ENCODE measurements at regions of chr9 and their contacts with region 1.

Region 1: DNA sequence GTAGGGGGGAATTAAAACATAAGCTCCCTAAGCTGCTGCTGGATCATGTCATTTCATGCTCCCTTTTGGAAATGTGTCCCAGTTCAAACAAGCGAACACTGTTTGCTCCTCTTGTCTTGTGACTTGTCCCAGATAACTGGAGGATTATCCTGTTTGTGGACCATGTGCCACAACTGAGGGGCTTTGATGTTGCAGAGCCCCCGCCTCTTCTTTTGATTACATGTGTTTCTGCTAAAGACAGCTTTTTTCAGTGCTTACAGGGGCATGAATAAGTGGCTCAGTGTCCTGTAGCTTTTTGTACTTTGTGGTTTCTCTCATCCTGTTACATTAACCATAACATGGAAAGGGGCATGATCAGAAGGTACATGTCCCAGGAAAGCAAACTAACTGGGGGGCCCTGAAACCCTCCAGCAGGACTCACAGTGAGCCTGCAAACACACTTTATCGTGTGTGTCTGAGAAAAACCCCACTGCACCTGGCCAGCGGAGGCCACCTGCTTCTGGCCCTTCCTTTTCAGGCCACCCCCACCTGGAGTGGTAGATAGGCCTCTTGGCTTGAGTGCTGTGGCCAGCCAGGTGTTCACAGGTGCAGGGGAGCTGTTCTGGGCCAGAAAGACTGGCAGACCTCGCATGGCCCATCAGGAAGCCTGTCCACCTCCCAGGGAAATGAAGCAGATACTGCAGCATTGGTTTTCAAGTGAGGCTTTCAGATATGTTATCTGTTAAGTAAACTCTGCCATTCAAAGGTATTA is 285.6 kb downstream of the FANCC start:
- DNase-seq: no peak
- ATAC-seq: no peak
- H3K4me3 ChIP-seq: no peak overlapping the region
- H3K27ac ChIP-seq: peak overlapping the region; percentile 93
- H3K4me1 ChIP-seq: peaks cover 90% of the 10 kb centered on the region
- H3K27me3 ChIP-seq: no peaks in the 10 kb centered on the region
- CTCF ChIP-seq: no peak

Region 2: GRCh38 chr9:95073021-95073607 is 41.2 kb after region 1 on chr9:
- intact Hi-C with region 1: loop called in 1 of 2 experiments (anchors 2 kb)
- DNase-seq: peak in 1 of 2 donors; percentile 67
- ATAC-seq: peak; percentile 56 to 70 (median 64)
- H3K4me3 ChIP-seq: no peak overlapping the region
- H3K27ac ChIP-seq: peak overlapping the region; percentile 93
- H3K4me1 ChIP-seq: peaks cover 90% of the 10 kb centered on the region
- H3K27me3 ChIP-seq: no peaks in the 10 kb centered on the region
- CTCF ChIP-seq: peak; percentile 28